ENCODE measurements at regions of chr4 and their contacts with region 1.

Region 1: DNA sequence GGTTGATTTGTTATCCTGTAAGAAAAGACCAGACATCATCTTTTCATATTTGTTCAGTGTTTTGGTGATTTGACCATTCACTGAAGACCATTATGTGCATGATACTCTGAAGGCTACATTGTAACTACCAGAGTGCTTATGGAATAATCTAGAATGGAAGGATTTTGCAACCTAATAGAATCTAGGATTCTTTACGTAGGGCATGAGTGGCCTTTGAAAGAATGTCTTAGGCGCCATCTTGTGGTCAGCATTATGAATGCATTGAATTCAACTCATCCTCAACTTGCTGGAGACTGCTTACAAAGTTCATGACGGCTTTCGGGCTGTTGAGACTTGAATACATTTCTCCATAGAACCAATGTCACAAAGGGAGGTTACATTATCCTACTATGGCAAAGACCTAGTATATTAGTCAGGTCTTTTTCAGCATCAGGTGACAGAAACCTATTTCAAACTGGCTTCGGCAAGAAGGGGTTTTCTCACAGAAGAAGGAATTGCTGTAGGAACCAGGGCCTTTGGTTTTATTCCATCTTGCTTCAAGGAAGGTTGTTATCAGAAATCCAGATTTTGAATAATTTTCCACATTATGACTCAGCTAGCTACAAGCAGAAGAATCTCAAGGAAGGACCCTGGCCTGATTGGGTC is 104.1 kb downstream of the GPAT3 start:
- DNase-seq: peak; percentile 61
- H3K4me3 ChIP-seq: no peak overlapping the region
- H3K27ac ChIP-seq: no peak overlapping the region
- H3K27me3 ChIP-seq: peaks cover 4% of the 10 kb centered on the region
- CTCF ChIP-seq: peak; percentile 87

Region 2: DNA sequence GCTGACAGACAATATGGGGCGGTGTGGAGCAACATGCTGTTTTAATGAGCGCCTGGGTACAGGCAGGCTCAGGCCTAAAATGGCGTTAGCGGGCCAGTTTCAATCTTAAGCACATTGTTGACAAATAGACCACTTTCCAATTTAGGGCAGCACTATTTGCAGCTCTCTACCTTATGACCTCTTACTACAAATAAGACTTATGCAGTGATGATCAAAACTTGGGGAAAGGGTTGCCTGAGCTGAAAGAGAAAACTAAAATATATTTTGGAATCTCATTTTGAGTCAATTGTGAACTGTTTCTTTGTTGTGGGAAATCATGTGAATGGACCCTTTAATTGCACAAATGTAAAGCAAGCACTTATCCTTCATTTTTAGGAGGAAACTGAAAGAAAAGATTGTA is 129.5 kb before region 1 on chr4:
- CTCF ChIA-PET with region 1: interaction called, 64 read pairs
- POLR2A ChIA-PET with region 1: no interaction called
- DNase-seq: no peak
- H3K4me3 ChIP-seq: no peak overlapping the region
- H3K27ac ChIP-seq: no peak overlapping the region
- H3K27me3 ChIP-seq: no peaks in the 10 kb centered on the region
- CTCF ChIP-seq: no peak

Region 3: DNA sequence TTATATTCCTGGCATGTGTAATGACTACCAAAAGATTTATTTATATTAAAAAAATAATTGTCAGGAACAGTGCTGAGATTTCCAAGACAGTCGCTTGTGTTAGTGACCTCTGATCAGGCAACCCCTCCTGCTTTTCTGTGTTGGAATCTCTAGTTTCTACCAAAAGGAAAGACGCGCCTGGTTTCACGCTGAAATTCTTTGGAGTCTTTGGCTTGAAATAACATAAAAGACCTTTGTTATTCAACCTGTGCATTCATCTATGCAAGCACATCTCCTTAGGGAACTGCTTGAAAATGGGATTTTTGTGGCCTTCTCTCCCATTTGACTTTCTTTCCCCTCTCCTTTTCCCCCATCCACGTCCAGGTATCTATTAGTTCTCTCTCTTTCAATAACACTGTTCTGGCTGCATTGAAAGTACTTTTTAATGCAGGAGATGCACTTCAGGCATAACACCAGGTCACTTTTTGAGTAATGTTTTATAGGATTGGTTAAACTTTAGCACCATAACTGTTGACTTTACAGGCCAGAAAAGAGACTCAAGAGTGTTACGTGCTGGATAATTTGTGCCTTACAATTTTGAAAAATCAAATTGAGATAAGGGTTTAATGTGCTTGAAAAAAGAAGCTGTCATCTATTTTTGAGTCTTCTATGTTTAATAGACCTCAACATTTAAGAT is 68.7 kb after region 1 on chr4:
- CTCF ChIA-PET with region 1: no interaction called
- POLR2A ChIA-PET with region 1: no interaction called
- DNase-seq: no peak
- H3K4me3 ChIP-seq: no peak overlapping the region
- H3K27ac ChIP-seq: no peak overlapping the region
- H3K27me3 ChIP-seq: no peaks in the 10 kb centered on the region
- CTCF ChIP-seq: no peak

Region 4: DNA sequence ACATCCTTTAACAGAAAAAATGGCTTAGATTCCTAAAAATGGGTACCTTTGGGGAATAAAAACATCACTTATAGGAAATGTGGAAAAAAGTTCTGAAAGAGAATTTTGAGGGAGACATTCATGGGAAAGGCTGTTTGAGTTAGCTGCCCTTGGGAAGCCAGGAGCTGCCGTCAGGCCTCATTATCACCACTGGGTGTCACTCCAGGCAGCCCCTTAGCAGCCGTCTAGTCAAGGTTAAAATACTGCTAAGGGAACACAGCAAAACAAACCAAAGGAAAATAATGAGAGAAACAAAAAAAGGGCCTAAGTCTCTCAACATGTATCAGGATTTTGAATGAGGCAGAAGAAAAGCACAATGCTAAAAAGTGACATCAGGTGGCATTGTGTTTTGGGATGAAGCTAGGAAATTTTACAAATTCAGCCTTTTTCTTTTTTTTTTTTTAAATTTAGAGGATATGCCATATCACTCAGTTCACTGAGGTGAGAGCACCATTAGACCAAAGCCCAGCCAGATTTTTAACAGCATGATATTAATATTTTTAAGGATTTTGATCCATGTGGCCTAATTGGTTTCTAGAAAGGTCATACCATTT is 131.2 kb after region 1 on chr4:
- CTCF ChIA-PET with region 1: interaction called, 12 read pairs
- POLR2A ChIA-PET with region 1: no interaction called
- DNase-seq: peak; percentile 15
- H3K4me3 ChIP-seq: no peak overlapping the region
- H3K27ac ChIP-seq: no peak overlapping the region
- H3K27me3 ChIP-seq: no peaks in the 10 kb centered on the region
- CTCF ChIP-seq: peak; percentile 96

Region 5: DNA sequence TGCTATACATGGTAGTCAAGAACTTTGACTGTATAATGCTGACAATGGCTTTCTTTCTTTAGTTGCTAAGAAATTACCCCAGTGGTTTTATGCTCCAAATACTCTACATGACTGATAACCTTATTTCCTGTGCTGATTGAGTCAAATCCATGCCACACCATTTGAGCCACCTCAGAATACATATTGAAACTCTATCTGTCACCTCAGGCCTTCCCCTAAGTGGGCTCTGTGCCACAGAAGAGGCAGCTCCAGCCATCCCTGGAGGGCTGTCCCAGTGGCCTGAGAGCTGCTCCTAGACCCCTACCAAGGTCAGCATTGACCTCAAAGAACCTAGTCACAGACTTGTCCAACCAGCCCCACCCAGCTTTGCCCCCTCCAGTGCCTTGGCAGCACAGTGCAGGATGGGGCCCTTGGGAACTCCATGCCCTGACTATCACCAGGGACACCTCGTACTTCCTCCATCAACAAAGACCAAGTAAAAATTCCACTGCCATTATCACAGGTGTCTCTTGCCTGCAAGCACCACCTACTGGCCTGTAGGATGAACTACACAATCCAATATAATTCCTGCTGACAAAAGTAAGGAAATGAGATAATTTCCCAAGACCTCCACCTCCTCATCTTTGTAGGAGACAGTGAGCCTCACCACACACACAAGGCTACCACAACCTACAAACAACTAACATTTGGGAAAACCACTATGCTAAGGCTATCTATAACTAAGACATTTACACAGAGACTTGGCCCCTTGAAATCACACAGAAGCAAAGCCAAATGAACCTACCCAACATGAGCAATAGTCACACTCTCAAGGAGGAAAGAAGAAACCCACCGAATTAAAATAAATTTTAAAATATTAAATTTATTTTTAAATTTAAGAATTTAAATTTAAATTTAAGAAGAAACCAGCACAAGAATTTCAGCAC is 619.2 kb after region 1 on chr4:
- CTCF ChIA-PET with region 1: interaction called, 23 read pairs
- POLR2A ChIA-PET with region 1: no interaction called
- DNase-seq: no peak
- H3K4me3 ChIP-seq: no peak overlapping the region
- H3K27ac ChIP-seq: no peak overlapping the region
- H3K27me3 ChIP-seq: no peaks in the 10 kb centered on the region
- CTCF ChIP-seq: peak; percentile 84

Region 6: GRCh38 chr4:84503495-84504437 is 863.8 kb after region 1 on chr4:
- CTCF ChIA-PET with region 1: interaction called, 41 read pairs
- POLR2A ChIA-PET with region 1: no interaction called
- DNase-seq: peak; percentile 21
- H3K4me3 ChIP-seq: no peak overlapping the region
- H3K27ac ChIP-seq: no peak overlapping the region
- H3K27me3 ChIP-seq: peaks cover 53% of the 10 kb centered on the region
- CTCF ChIP-seq: peak; percentile 87